ENCODE measurements at regions of chr7 and their contacts with region 1.

Region 1: GRCh38 chr7:83936056-83936708 is 258.4 kb downstream of the SEMA3A start:
- DNase-seq: peak; percentile 71
- ATAC-seq: peak; percentile 73
- H3K4me3 Mint-ChIP-seq: no peak overlapping the region
- H3K27ac Mint-ChIP-seq: no peak overlapping the region
- H3K4me1 Mint-ChIP-seq: no peaks in the 10 kb centered on the region
- H3K27me3 Mint-ChIP-seq: no peaks in the 10 kb centered on the region

Region 2: DNA sequence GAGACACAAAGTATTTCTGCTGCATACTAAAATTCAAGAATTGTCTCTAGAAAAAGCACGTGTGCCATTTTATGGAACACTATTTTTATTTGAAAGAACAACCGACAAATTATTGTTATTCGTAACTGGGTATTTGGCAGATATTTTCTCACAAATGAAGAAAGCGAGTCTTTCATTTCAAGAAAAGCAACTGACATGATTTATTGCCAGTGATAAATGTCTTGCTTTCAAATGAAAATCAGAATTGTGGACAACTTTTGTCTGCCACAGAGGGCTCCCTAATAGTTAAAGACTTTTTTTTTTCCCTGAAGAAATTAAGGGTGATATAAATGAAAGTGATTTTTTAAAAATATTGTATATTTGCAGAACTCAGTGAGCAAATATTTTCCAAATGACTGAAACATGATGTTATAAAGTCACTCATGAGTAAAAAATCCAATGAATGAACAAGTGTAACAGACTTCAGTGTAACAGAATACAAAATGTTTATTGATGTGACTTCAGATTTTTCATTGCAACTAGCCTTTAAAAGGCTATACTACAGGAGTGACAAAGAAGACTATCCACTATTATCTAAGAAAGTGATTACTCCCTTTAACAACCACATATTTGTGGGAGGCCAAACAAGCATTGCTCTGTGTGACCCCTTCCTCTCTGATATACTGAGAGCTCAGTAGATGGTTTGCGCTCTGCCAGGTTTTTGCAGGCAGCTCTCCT is 238.2 kb before region 1 on chr7:
- CTCF ChIA-PET with region 1: no interaction called
- POLR2A ChIA-PET with region 1: no interaction called
- DNase-seq: no peak
- ATAC-seq: no peak
- H3K4me3 Mint-ChIP-seq: no peak overlapping the region
- H3K27ac Mint-ChIP-seq: no peak overlapping the region
- H3K4me1 Mint-ChIP-seq: no peaks in the 10 kb centered on the region
- H3K27me3 Mint-ChIP-seq: no peaks in the 10 kb centered on the region

Region 3: DNA sequence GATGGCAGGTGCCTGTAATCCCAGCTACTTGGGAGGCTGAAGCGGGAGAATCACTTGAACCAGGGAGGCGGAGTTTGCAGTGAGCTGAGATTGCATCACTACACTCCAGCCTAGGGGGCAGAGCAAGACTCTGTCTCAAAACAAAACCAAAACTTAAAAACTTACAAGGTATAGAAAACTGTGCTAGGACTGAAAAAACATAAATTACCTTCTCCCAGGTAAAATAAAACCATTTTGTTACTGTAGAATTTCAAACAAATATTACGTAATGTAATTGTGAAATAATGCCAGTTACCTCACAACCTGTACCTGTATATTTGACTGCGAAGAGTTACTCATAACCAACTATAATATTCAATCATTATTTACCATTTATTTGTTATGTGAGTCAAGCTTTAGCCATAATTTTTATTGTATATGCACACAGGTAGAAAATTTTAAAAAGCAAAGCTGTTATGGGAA is 77.6 kb after region 1 on chr7:
- CTCF ChIA-PET with region 1: no interaction called
- POLR2A ChIA-PET with region 1: no interaction called
- DNase-seq: no peak
- ATAC-seq: no peak
- H3K4me3 Mint-ChIP-seq: no peak overlapping the region
- H3K27ac Mint-ChIP-seq: no peak overlapping the region
- H3K4me1 Mint-ChIP-seq: peaks cover 6% of the 10 kb centered on the region
- H3K27me3 Mint-ChIP-seq: no peaks in the 10 kb centered on the region

Region 4: GRCh38 chr7:85023045-85023712 is 1087.0 kb after region 1 on chr7:
- CTCF ChIA-PET with region 1: interaction called, 17 read pairs
- POLR2A ChIA-PET with region 1: no interaction called
- DNase-seq: peak; percentile 38
- ATAC-seq: no peak
- H3K4me3 Mint-ChIP-seq: no peak overlapping the region
- H3K27ac Mint-ChIP-seq: no peak overlapping the region
- H3K4me1 Mint-ChIP-seq: no peaks in the 10 kb centered on the region
- H3K27me3 Mint-ChIP-seq: peaks cover 3% of the 10 kb centered on the region

Measured in activated CD8-positive, alpha-beta T cell treated with anti-CD3 and anti-CD28 coated beads, Interleukin-2, amount 10 ng/mL, durations not matched to agents 7 days and 5 days (primary cell).